Heart left ventricle (tissue), 16 donors: ENCODE measurements at regions of chr10 and their contacts with region 1.

Region 1: GRCh38 chr10:101938316-101939281 is 95.0 kb upstream of the KCNIP2 start:
- DNase-seq: peak in 1 of 5 donors; percentile 13
- ATAC-seq: peak in 3 of 4 donors; percentile 30 to 55 (median 38)
- H3K4me3 ChIP-seq: peak overlapping the region in 10 of 12 donors; percentile 4 to 52 (median 28)
- H3K27ac ChIP-seq: peak overlapping the region; percentile 61 to 88 (median 78)
- H3K4me1 ChIP-seq: peaks cover 0 to 76% (median 39%) of the 10 kb centered on the region in 12 donors
- H3K27me3 ChIP-seq: no peaks in the 10 kb centered on the region
- CTCF ChIP-seq: no peak
- POLR2A ChIP-seq: no peak

Region 2: DNA sequence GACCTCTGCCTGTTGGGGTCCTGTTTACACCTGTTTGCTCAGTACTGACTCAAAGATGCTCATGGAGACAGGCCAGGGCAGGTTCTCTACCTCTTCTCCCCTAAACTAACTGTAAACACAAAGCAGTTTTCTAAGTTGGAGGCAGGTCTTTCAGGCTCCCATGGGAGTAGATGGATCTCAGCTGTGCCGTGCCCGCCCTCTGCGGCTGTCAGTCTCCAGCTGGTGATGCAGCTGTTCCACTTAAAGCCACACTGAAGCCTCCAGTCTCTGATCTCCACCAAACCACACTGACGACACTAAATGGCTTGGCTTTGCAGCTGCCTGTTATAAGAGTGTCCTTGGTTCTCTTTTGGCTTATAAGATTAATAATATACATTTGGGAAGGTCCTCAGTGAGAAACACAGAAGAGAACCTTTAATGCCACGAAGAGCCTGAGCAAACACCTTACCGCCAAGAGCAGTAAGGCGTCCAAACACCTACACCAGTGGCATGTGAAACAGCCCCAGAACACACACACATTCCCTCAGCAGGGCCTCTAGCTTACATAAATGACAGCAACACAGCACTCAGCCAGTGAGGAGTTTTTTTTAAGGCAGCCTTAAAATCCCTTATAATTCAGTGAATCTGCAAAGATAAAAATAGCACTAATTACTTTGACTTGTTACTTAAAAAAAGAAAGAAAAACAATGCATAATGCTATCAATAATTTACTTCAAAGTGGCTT is 34.6 kb before region 1 on chr10:
- intact Hi-C with region 1: loop called in 1 of 10 experiments (anchors 5 kb)
- DNase-seq: no peak
- ATAC-seq: peak in 3 of 4 donors; percentile 40 to 62 (median 52)
- H3K4me3 ChIP-seq: no peak overlapping the region
- H3K27ac ChIP-seq: no peak overlapping the region
- H3K4me1 ChIP-seq: peaks cover 0 to 35% (median 8%) of the 10 kb centered on the region in 12 donors
- H3K27me3 ChIP-seq: no peaks in the 10 kb centered on the region
- CTCF ChIP-seq: no peak
- POLR2A ChIP-seq: no peak

Region 3: DNA sequence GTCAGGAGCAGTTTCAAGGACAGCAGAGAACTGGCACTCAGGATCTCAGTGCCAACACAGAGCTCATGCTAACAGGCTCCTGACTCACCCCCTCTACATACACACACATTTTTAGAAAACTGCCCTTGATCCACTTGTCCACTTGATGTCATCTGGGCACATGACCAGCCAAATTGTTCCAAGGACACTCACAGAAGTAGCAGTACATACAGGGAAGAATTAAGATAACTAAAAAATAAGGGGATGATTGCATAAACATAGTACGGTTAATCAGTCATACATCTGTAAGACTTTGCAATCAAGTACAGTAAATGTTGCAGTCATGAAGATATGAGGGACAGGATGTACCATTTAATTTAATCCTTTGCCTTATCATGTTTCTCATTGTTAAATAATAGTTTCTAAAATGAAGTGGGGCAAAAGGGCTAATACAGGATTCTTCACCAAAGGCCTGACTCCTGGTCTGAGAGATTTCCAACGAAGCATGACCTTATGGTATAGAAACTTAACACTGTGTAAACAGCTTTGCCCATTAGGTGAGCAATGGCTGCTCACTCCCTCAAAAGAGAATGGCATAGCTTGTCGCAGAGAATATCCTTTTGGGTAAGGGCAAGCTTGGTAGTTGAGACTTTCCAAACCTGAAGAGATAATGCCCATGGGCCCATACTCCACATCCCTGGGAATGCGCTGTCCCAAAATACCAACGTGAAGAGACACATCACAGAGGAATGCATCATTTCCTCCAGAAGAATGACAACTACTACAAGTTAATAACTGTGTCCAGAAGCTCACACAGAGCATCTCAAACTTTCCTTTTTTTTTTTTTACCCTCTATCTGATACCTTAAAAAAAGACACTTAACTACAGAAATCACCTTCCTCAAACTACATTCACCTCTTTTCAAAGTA is 23.2 kb after region 1 on chr10:
- intact Hi-C with region 1: loop called in 1 of 10 experiments (anchors 2 kb)
- DNase-seq: peak in 4 of 5 donors; percentile 57 to 82 (median 66)
- ATAC-seq: peak; percentile 88 to 93 (median 92)
- H3K4me3 ChIP-seq: no peak overlapping the region
- H3K27ac ChIP-seq: peak overlapping the region; percentile 73 to 95 (median 87)
- H3K4me1 ChIP-seq: peaks cover 0 to 53% (median 12%) of the 10 kb centered on the region in 12 donors
- H3K27me3 ChIP-seq: no peaks in the 10 kb centered on the region
- CTCF ChIP-seq: no peak
- POLR2A ChIP-seq: no peak